ENCODE measurements at regions of chr12 and their contacts with region 1.

Region 1: GRCh38 chr12:127280393-127281275 is 986.3 kb upstream of the TMEM132C start:
- DNase-seq: peak; percentile 49 to 99
- H3K4me3 ChIP-seq: peak overlapping the region in 2 of 4 experiments; percentile 15 to 53; a peak in 5 of 8 replicates
- H3K27ac ChIP-seq: no peak overlapping the region
- H3K4me1 ChIP-seq: no peaks in the 10 kb centered on the region; a peak in 1 of 7 replicates
- H3K27me3 ChIP-seq: no peaks in the 10 kb centered on the region
- CTCF ChIP-seq: peak; percentile 96 to 100 (median 100)
- EP300 ChIP-seq: peak in 1 of 2 experiments; percentile 92; a peak in 1 of 3 replicates
- POLR2A ChIP-seq: no peak
- RAD21 ChIP-seq: peak; percentile 75 to 86

Region 2: GRCh38 chr12:127158385-127159061 is 122.1 kb before region 1 on chr12:
- CTCF ChIA-PET with region 1: no interaction called
- POLR2A ChIA-PET with region 1: no interaction called
- DNase-seq: no peak
- H3K4me3 ChIP-seq: no peak overlapping the region
- H3K27ac ChIP-seq: no peak overlapping the region
- H3K4me1 ChIP-seq: no peaks in the 10 kb centered on the region
- H3K27me3 ChIP-seq: no peaks in the 10 kb centered on the region
- CTCF ChIP-seq: no peak
- EP300 ChIP-seq: no peak
- POLR2A ChIP-seq: no peak
- RAD21 ChIP-seq: no peak

Region 3: GRCh38 chr12:127263621-127264020 is 17.0 kb before region 1 on chr12:
- CTCF ChIA-PET with region 1: interaction called, 55 read pairs
- POLR2A ChIA-PET with region 1: no interaction called
- DNase-seq: no peak
- H3K4me3 ChIP-seq: no peak overlapping the region
- H3K27ac ChIP-seq: no peak overlapping the region
- H3K4me1 ChIP-seq: no peaks in the 10 kb centered on the region
- H3K27me3 ChIP-seq: no peaks in the 10 kb centered on the region
- CTCF ChIP-seq: no peak
- EP300 ChIP-seq: no peak
- POLR2A ChIP-seq: no peak
- RAD21 ChIP-seq: no peak

Region 4: GRCh38 chr12:127293507-127294310 is 13.1 kb after region 1 on chr12:
- CTCF ChIA-PET with region 1: interaction called, 82 read pairs
- POLR2A ChIA-PET with region 1: no interaction called
- DNase-seq: peak; percentile 44 to 87
- H3K4me3 ChIP-seq: no peak overlapping the region
- H3K27ac ChIP-seq: no peak overlapping the region
- H3K4me1 ChIP-seq: no peaks in the 10 kb centered on the region
- H3K27me3 ChIP-seq: no peaks in the 10 kb centered on the region
- CTCF ChIP-seq: peak; percentile 87 to 99 (median 99)
- EP300 ChIP-seq: no peak
- POLR2A ChIP-seq: no peak
- RAD21 ChIP-seq: peak; percentile 92 to 93

Region 5: GRCh38 chr12:127311720-127312364 is 31.2 kb after region 1 on chr12:
- CTCF ChIA-PET with region 1: no interaction called
- POLR2A ChIA-PET with region 1: no interaction called
- DNase-seq: no peak
- H3K4me3 ChIP-seq: no peak overlapping the region
- H3K27ac ChIP-seq: no peak overlapping the region
- H3K4me1 ChIP-seq: no peaks in the 10 kb centered on the region
- H3K27me3 ChIP-seq: no peaks in the 10 kb centered on the region
- CTCF ChIP-seq: no peak
- EP300 ChIP-seq: no peak
- POLR2A ChIP-seq: no peak
- RAD21 ChIP-seq: no peak

Region 6: GRCh38 chr12:127355061-127355841 is 74.6 kb after region 1 on chr12:
- CTCF ChIA-PET with region 1: interaction called, 18 read pairs
- POLR2A ChIA-PET with region 1: no interaction called
- DNase-seq: peak in 1 of 2 experiments; percentile 53
- H3K4me3 ChIP-seq: no peak overlapping the region
- H3K27ac ChIP-seq: no peak overlapping the region
- H3K4me1 ChIP-seq: no peaks in the 10 kb centered on the region; a peak in 1 of 7 replicates
- H3K27me3 ChIP-seq: no peaks in the 10 kb centered on the region
- CTCF ChIP-seq: peak; percentile 76 to 83 (median 77)
- EP300 ChIP-seq: no peak
- POLR2A ChIP-seq: no peak
- RAD21 ChIP-seq: peak; percentile 76 to 81

Region 7: DNA sequence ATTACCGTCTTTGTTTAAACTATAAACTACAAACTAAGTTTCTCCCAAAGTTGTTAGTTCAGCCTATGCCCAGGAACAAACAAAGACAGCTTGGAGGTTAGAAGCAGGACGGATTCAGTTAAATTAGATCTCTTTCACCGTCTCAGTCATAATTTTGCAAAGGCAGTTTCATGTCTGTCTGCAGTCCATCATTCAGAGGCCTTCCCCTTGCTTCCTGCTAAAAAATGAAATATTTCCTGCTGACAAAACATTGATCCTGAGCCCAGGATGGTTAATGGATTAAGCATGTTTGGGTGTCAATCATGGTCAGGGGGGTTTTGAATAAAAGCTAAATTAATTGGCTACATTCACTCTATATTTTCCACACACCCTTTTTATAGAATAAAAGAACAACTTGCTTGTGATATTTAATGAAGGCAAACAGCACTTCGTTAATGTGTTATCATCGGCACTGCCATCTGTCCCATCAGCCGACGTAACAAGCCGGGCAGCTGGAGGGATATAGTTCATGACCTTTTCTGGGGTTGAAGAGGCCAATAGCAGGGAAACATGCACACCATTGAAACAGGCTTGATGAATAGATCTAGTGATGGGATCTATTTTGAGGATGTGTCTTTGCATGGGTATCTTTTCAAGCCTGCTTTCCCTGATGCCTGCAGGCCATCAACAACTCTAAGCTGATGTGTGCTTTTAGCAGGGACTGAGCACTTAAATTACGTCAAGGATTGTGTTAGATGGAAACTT is 465.0 kb after region 1 on chr12:
- CTCF ChIA-PET with region 1: no interaction called
- POLR2A ChIA-PET with region 1: no interaction called
- DNase-seq: no peak
- H3K4me3 ChIP-seq: no peak overlapping the region
- H3K27ac ChIP-seq: no peak overlapping the region
- H3K4me1 ChIP-seq: peaks cover 0 to 3% (median 0%) of the 10 kb centered on the region in 4 experiments; a peak in 2 of 7 replicates
- H3K27me3 ChIP-seq: no peaks in the 10 kb centered on the region
- CTCF ChIP-seq: no peak
- EP300 ChIP-seq: no peak
- POLR2A ChIP-seq: no peak
- RAD21 ChIP-seq: no peak

Measured in H1 (cell line).